Left ventricle myocardium superior (tissue), 1 donor: ENCODE measurements at regions of chr1 and their contacts with region 1.

Region 1: DNA sequence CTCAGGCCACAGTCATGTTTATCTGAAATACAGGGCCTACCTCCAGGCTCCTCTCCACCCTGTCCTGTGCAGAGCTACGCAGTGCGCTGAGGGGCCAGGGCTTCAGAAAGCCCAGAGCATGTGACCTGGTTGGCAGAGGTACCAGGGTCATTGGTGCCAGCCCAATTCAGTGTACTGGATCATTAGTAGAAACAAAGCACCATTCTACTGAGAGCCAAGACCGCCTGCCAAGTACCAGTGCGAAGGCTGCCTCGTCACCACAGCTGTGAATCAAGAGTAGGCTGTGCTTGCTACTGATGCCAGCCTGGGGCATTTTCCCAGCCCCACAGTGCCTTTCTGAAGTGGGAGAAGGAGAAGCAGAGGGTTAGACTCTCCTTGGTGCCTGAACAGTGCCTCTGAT is 59.8 kb downstream of the CAPN9 start:
- DNase-seq: peak; percentile 87
- ATAC-seq: peak; percentile 96

Region 2: GRCh38 chr1:230867903-230868735 is 61.1 kb after region 1 on chr1 and contains the start of gene C1orf198:
- intact Hi-C with region 1: loop called (anchors 10 kb)
- DNase-seq: peak; percentile 86
- ATAC-seq: peak; percentile 92
- total RNA-seq, gene C1orf198: 49.8 TPM